Left cardiac atrium (tissue), 4 donors: ENCODE measurements at regions of chrX and their contacts with region 1.

Region 1: DNA sequence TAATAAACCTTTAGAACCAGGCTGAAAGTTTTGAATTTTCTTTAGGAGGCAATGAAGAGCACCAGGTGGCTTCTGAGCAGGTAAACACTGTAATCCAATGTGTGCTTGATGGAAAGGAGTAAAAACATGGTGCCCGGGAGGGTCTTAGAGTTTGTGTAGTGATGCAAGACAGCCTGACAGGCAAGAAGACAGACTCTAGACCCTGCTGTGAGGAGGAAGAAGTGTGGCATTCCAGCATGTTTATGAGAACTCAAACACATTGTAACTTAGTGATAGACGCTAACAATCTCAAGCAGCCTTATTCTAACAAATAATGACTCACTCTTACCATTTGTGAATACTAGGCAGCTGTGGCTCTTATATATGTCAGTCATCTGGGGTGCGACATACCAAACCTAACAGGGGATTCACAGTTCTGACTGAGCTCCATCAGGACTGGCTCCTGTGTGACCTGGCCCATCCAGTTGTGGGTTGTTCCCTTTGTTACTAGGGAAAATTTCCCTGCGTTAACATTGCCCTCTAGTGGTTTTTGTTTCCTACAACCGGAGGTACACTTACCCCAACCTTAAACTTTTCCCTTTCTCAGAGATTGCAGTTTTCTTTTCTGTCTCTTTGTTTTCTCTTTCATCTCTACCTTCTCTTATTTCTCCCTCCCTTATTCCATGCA is 53.8 kb downstream of the VSIG4 start:
- DNase-seq: peak; percentile 27
- ATAC-seq: peak; percentile 74 to 85

Region 2: DNA sequence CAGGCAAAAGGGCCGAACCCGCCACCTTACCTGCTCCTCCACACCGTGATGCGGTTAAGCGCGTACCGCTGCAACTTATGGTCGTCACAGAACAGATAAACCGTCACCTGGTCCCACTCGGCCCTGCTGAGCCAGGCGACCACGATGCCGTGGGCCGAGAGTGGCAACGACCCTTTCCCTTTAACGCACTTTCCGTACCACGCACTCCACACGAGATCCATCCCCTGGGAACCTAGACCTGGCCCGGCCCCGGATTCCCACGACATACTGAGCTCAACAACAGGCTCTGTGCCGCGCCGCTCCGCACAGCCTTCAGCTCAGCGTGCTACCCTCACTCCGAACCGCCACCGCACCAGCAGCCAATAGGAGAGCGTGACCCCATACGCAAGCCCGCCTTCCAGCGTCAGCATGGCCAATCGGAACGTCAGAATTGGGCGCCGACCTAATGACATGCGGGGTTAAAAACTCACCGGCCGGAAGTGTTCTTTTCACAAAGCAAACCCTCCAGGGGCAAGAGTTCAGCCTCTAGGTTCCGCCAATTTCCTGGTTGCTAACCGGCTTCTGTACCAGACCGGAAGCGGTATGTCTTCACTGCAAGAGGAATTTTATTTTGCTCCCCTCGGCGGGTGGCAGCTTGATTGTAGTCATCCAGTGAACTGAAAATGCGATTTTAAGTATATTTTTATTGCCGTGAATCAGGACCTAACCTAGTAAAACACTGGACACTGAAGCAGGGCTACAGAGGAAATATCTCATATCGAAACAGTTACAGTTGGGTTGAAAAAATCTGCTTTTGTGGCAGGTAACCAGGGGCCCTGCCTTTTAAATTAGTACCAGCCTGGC is 451.4 kb before region 1 on chrX and contains the start of gene LAS1L:
- intact Hi-C with region 1: no loop called
- DNase-seq: peak; percentile 91
- ATAC-seq: peak; percentile 99 to 100
- total RNA-seq, gene LAS1L: 15.2 to 15.3 TPM

Region 3: DNA sequence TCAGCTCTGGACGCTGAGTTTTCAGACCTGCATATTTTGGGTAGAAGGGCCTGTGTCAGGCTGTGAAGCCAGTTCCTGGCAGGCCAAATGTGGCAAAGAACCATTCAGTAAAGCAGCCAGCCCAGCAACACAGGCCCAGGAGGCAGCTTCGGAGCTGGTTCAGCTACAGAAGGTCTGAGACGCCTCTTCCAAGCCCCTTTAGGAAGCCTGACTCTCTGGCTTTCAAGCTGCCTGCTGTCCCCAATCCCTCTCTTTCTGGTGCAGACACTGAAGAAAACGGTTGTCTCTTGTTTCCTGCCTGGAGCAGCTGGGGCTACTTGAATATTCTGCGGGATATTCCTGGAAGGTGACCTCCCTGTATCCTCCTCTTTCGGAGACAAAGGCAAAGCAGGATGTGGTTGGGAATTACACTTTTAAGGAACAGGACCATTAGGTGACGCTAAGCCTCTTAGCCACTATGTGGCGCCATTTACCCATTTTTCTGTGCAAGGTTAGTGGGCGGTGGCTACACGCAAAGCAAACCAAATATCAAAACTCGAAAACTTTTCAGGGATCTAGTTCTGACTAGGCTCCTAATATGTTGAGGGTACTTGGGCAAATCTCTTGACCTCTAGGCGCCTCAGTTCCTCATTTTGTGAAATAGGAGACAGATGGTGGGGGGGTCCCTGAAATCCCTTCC is 404.3 kb before region 1 on chrX:
- intact Hi-C with region 1: loop called (anchors 2 to 5 kb)
- DNase-seq: peak; percentile 54
- ATAC-seq: peak; percentile 84